ENCODE measurements at regions of chrX and their contacts with region 1.

Region 1: GRCh38 chrX:16807548-16807947 is 21.3 kb downstream of the TXLNG start:
- DNase-seq: no peak
- H3K4me3 ChIP-seq: no peak overlapping the region; the same call in 1 of the 2 replicates
- H3K27ac ChIP-seq: peak overlapping the region; percentile 36; the same call in 1 of the 2 replicates
- H3K4me1 ChIP-seq: peaks cover 14% of the 10 kb centered on the region
- H3K27me3 ChIP-seq: no peaks in the 10 kb centered on the region
- CTCF ChIP-seq: no peak

Region 2: DNA sequence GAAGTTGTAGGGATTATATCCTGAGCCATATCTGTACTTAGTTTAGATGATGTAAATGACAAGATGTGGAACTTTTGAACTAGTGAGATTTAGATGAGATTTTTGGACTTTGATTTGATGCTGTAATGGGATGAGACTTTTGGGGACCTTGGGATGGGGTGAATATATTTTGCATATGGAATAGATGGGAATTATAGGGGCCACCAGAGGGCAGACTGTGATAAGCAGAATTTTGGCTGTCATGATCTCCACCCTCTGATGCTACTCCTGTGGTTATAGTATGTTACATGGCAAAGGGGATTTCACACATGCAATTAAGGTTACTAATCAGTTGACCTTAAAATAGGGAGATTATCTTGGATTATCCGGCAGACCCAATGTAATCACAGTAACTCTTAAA is 353.4 kb after region 1 on chrX:
- CTCF ChIA-PET with region 1: interaction called, 13 read pairs
- POLR2A ChIA-PET with region 1: no interaction called
- intact Hi-C with region 1: no loop called
- DNase-seq: peak in 1 of 2 experiments; percentile 38
- H3K4me3 ChIP-seq: no peak overlapping the region
- H3K27ac ChIP-seq: no peak overlapping the region
- H3K4me1 ChIP-seq: no peaks in the 10 kb centered on the region
- H3K27me3 ChIP-seq: no peaks in the 10 kb centered on the region
- CTCF ChIP-seq: peak; percentile 55